Mucosa of descending colon (tissue), 3 donors: ENCODE measurements at regions of chr7 and their contacts with region 1.

Region 1: DNA sequence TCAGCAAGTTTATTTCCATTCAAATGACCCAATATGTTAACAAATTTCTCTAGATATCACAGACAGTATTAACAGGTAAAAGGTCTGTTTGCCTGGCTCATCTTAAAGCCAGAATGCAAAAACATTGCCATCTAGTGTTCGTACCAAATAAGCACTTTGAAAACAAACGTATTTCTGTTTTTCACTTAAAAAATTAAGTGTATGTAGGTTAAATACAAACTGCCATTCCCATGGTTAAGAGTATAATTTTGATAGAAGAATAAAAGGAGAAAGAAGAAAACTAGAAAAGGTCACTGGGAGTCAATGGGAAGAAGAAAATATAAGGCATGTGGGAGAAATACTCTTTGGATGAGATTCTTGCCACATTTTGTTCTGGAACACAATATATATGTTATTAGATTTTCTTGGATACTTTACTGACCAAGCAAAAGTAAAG is 51.0 kb downstream of the ORC5 start:
- DNase-seq: no peak
- ATAC-seq: no peak
- H3K4me3 ChIP-seq: no peak overlapping the region
- H3K4me1 ChIP-seq: no peaks in the 10 kb centered on the region
- CTCF ChIP-seq: no peak

Region 2: GRCh38 chr7:103576641-103577040 is 580.2 kb before region 1 on chr7:
- intact Hi-C with region 1: loop called in 1 of 2 experiments (anchors 5 kb)
- DNase-seq: no peak
- ATAC-seq: no peak
- H3K4me3 ChIP-seq: no peak overlapping the region
- H3K4me1 ChIP-seq: no peaks in the 10 kb centered on the region
- CTCF ChIP-seq: no peak

Region 3: DNA sequence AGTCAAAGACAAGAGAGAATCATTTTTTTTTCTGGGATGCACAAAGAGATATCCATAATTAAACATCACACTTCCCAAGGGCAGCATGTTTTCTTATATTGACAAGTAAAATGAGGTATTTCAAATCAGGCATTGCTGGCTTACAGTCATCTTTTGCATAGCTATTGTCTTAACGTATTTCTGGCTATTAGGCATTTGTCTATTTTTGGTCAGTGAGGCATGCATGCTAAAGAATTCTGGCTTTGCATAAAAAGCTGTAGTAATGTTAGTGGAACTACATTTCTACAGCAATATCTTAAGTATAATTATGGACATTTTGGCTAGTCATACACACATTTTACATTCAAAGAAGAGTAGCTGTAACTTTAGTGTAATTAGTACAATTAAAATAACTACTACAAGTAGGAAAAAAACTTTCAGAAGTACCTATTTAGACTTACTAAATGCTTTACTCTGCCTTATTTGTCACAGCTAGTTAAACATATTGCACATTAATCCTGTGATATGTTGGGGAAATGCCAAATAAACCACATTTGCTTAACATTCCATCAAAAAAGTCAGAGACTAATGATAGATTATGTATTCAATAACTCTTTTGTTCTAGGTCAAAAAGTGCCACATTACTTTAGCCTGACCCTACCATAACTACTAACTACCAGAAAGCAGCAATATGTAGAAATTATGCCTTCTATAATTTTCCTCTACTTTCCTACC is 243.8 kb before region 1 on chr7:
- intact Hi-C with region 1: no loop called
- DNase-seq: no peak
- ATAC-seq: no peak
- H3K4me3 ChIP-seq: no peak overlapping the region
- H3K4me1 ChIP-seq: no peaks in the 10 kb centered on the region
- CTCF ChIP-seq: no peak

Region 4: DNA sequence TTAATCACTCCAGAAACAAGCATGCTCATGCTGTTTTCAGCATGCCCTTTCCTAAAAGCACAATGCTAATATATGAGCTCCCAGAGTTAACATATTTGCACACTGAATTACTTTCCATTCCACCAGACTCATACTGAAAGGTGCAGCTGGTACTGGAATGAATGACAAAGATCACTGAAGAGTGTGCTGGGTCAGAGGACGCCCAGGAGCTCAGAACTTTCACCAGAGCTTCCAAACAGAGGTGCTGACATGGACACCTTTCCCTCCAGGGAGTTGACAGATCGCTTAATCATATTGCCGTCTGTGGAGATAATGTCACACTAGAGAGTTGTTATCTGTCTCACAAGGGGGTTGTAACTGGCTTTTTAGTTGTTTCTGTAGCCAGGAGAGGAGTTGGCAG is 464.5 kb after region 1 on chr7:
- intact Hi-C with region 1: no loop called
- DNase-seq: no peak
- ATAC-seq: no peak
- H3K4me3 ChIP-seq: no peak overlapping the region
- H3K4me1 ChIP-seq: no peaks in the 10 kb centered on the region
- CTCF ChIP-seq: no peak

Region 5: DNA sequence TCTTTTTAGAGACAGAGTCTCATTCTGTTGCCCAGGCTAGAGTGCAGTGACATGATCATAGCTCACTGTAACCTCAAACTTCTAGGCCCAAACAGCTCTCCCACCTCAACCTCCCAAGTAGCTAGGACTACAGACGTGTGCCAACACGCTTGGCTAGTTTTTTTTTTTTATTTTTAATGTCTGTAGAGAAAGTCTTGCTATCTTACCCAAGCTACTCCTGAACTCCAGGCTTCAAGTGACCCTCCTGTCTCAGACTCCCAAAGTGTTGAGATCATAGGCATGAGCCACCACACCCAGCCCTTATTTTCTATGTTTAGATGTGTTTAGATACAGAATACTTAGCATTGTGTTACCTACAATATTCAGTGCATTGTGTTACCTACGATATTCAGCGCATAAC is 903.6 kb after region 1 on chr7:
- intact Hi-C with region 1: no loop called
- DNase-seq: no peak
- ATAC-seq: no peak
- H3K4me3 ChIP-seq: no peak overlapping the region
- H3K4me1 ChIP-seq: peaks cover 2% of the 10 kb centered on the region
- CTCF ChIP-seq: no peak